ENCODE measurements at regions of chr17 and their contacts with region 1.

Region 1: GRCh38 chr17:50169121-50169764 is 3.4 kb downstream of the SGCA start:
- DNase-seq: no peak
- H3K4me3 ChIP-seq: no peak overlapping the region
- CTCF ChIP-seq: peak; percentile 84

Region 2: GRCh38 chr17:49434821-49435670 is 734.2 kb before region 1 on chr17:
- CTCF ChIA-PET with region 1: no interaction called
- POLR2A ChIA-PET with region 1: no interaction called
- DNase-seq: no peak
- H3K4me3 ChIP-seq: no peak overlapping the region
- CTCF ChIP-seq: peak; percentile 70

Region 3: DNA sequence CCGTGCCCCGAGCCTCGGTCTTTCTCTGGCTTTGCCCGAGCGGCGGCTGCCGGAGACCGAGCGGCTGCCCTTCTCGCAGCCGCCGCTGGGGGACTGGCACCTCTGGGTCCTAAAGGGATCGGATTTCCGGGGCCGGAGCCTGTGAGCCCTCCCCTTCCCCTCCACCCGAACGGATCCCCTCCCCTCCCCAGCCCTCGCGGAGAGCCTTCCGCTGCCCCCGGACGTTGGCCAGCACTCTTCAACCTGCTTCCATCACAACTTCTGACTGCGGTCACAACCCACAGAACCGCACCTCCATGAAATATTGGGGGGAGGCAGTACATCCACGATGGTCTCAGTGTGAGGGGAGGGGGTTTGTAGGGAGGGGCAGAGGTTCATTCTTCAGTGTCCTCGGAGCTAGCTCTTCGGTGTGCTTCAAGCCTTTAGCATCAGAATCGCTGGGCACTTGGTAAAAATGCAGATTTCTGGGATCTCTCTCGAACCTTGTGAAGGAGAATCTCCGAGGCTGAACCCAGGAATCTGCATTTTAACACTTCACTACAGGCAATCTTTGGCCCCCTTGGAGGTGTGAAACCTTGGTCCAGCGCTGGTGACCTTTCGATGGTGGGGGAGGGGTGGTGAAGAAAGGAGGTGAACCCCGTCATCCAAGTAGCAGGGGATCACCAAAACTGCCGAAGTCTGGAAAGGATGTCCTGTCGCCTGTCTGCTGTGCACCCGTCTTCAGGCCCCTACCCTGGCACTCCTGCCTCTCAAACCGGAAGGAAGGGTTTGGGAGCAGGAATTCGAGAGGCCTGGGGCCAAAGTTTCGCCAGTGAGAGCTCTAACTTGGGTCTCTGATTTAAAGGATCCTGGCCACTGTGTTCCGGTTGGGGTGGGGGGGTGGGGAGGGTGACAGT is 18.0 kb before region 1 on chr17:
- CTCF ChIA-PET with region 1: interaction called, 39 read pairs
- POLR2A ChIA-PET with region 1: no interaction called
- DNase-seq: no peak
- H3K4me3 ChIP-seq: peak overlapping the region; percentile 77
- CTCF ChIP-seq: peak; percentile 81

Region 4: DNA sequence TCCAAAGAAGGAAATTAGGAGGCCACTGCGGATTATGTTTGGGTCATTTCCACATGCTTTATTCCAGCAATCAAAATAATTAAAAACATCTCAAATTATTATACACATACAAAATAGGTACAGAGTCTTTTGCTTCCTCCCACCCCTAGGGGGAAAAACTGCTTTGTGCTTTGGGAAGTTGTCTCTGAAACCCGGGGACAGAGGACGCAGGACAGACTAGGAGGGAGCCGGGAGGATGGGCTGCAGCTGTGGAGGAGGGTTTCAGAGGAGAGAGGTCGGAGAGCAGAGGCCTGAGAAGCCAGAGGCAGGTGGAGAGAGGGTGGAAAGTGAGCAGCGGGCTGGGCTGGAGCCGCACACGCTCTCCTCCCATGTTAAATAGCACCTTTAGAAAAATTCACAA is 14.8 kb after region 1 on chr17:
- CTCF ChIA-PET with region 1: interaction called, 6 read pairs
- POLR2A ChIA-PET with region 1: interaction called, 11 read pairs
- DNase-seq: no peak
- H3K4me3 ChIP-seq: no peak overlapping the region; the same call in 1 of the 2 replicates
- CTCF ChIP-seq: peak; percentile 24

Region 5: GRCh38 chr17:50640701-50641351 is 471.6 kb after region 1 on chr17:
- CTCF ChIA-PET with region 1: no interaction called
- POLR2A ChIA-PET with region 1: no interaction called
- DNase-seq: no peak
- H3K4me3 ChIP-seq: no peak overlapping the region
- CTCF ChIP-seq: no peak

Measured in AG04449 (cell line).